Activated T-helper 1 cell treated with anti-CD3 and anti-CD28 coated beads, Interleukin-12 subunit alpha, Interleukin-12 subunit beta, Interleukin-2, Interleukin-4 antibody, amounts not matched to agents 30 ng/mL and 10 ng/mL and 1 ng/mL, durations not matched to agents 14 hours and 24 hours and 36 hours (primary cell): ENCODE measurements at regions of chr6 and their contacts with region 1.

Region 1: DNA sequence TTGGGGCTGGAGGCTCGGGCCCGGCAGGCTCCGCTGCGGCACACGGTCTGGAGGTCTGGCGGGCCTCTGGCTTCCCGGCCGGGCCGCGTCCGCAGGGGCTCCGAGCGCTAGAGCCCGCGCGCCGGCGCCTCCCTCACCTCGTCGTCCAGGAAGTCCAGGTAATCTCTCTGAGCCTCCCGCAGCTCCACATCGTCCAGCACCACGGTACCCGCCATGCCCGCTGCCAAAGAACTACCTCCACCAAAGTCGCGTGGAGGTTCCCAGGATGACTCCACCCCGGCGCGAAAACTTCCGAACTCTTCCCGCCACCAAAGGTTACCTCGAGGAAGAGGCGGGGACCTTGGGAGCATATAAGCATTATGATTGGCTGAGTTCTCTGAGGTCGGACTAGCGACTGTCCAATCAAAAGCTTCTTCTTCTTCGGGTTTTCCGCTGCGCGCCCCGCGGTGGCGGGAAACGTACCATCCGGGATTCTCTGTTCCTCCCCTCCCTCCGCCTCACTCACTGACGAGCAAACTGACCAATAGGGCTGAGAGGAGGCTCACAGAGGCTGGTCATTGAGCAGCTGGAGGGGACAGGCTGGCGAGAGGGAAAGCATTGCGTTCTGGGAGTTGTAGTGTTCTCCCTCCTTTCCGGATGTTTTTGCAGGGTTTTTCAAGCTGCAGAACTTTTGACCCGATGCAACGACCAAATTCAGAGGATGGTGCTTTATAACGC is at the start of gene MCM3:
- DNase-seq: peak; percentile 97
- H3K4me3 Mint-ChIP-seq: no peak within 1 kb of the TSS
- H3K27ac Mint-ChIP-seq: peak within 1 kb of the TSS; percentile 76
- H3K4me1 Mint-ChIP-seq: peaks cover 50% of the 10 kb centered on the region
- H3K27me3 Mint-ChIP-seq: no peaks in the 10 kb centered on the region
- total RNA-seq, gene MCM3: 212 and 214 TPM in 2 replicates

Region 2: GRCh38 chr6:52253494-52253893 is 31.1 kb before region 1 on chr6:
- intact Hi-C with region 1: no loop called
- DNase-seq: peak; percentile 19
- H3K4me3 Mint-ChIP-seq: no peak overlapping the region
- H3K27ac Mint-ChIP-seq: no peak overlapping the region
- H3K4me1 Mint-ChIP-seq: peaks cover 32% of the 10 kb centered on the region
- H3K27me3 Mint-ChIP-seq: peaks cover 54% of the 10 kb centered on the region

Region 3: GRCh38 chr6:52263709-52264540 is 20.7 kb before region 1 on chr6:
- intact Hi-C with region 1: loop called (anchors 1 kb)
- DNase-seq: peak; percentile 63
- H3K4me3 Mint-ChIP-seq: no peak overlapping the region
- H3K27ac Mint-ChIP-seq: peak overlapping the region; percentile 47
- H3K4me1 Mint-ChIP-seq: peaks cover 7% of the 10 kb centered on the region
- H3K27me3 Mint-ChIP-seq: no peaks in the 10 kb centered on the region

Region 4: DNA sequence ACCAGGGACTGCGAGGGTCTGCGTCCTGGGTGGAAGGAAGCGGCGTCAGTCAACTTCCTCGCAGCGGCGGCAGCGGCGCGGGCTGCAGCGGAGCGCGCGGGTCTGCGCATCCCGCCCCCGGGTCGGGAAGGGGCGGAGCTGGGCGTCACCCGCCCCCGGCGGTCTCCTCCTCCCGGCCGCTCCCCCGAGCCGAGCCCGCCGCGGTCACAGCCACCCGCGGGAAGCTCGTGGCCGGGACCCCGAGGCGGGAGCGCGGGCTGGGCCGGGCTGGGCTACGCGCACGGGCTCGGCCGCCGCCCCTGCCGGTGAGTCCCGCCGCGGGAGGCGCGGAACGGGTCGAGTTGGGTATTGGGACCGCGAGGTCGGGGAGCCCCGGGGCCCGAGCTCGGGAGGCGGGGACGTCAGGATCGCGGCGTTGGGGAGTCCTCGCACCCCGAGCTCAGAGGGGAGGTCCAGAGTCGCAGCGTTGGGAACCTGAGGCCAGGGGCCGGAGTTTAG is 77.4 kb after region 1 on chr6 and contains the start of gene PAQR8:
- intact Hi-C with region 1: loop called (anchors 1 kb)
- DNase-seq: peak; percentile 75
- H3K4me3 Mint-ChIP-seq: peak within 1 kb of the TSS; percentile 96
- H3K27ac Mint-ChIP-seq: peak within 1 kb of the TSS; percentile 84
- H3K4me1 Mint-ChIP-seq: peaks cover 33% of the 10 kb centered on the region
- H3K27me3 Mint-ChIP-seq: peaks cover 7% of the 10 kb centered on the region
- total RNA-seq, gene PAQR8: 2.5 and 2.8 TPM in 2 replicates

Region 5: DNA sequence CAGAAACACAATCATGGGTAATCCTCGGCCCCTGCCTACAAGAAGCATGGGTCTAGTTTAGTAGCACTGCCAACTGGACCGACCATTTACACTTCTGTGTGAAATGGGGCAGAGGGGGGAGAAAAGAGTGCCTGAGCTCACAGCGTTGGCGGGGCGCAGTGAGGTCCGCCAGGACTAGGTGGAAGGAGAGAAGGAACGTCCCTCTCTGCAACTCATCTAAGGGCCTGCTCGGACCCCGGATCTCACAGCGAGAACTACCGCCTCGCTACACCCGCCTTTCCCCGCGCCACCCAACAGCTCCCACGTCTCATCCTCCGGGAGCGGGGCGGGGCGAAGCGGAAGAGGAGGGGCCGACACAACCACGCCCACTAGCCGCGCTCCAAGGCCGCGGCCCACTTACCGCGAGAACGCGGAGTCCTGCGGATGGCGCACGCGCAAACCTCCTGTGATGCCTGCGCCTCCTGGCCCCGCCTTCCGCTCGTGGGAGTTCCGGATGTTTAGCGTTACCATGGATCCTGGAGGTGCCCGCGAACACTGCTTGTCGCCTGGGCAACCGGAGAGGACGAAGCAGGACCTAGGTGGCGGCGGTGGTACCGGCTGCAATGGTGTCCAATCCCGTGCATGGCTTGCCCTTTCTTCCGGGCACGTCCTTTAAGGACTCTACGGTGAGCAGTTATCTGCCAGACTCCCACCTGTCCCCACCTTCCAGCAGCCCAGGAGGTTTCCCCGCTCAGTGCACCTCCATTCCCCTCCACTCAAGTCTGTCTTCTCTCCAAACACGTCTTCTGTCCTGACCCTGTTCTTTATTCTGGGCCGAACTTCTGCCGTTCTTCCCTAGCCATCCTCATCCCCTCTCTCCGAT is 135.4 kb after region 1 on chr6 and contains the start of gene EFHC1:
- intact Hi-C with region 1: loop called (anchors 1 kb)
- DNase-seq: peak; percentile 98
- H3K4me3 Mint-ChIP-seq: no peak within 1 kb of the TSS
- H3K27ac Mint-ChIP-seq: no peak within 1 kb of the TSS
- H3K4me1 Mint-ChIP-seq: peaks cover 14% of the 10 kb centered on the region
- H3K27me3 Mint-ChIP-seq: peaks cover 6% of the 10 kb centered on the region
- total RNA-seq, gene EFHC1: 0.70 and 1.3 TPM in 2 replicates

Region 6: GRCh38 chr6:52435345-52435744 is 150.7 kb after region 1 on chr6:
- intact Hi-C with region 1: no loop called
- DNase-seq: no peak
- H3K4me3 Mint-ChIP-seq: no peak overlapping the region
- H3K27ac Mint-ChIP-seq: no peak overlapping the region
- H3K4me1 Mint-ChIP-seq: peaks cover 6% of the 10 kb centered on the region
- H3K27me3 Mint-ChIP-seq: peaks cover 12% of the 10 kb centered on the region

Region 7: GRCh38 chr6:52995913-52996645 is 711.5 kb after region 1 on chr6:
- intact Hi-C with region 1: loop called (anchors 5 kb)
- DNase-seq: no peak
- H3K4me3 Mint-ChIP-seq: peak overlapping the region; percentile 88
- H3K27ac Mint-ChIP-seq: peak overlapping the region; percentile 99
- H3K4me1 Mint-ChIP-seq: peaks cover 47% of the 10 kb centered on the region
- H3K27me3 Mint-ChIP-seq: peaks cover 11% of the 10 kb centered on the region

Region 8: DNA sequence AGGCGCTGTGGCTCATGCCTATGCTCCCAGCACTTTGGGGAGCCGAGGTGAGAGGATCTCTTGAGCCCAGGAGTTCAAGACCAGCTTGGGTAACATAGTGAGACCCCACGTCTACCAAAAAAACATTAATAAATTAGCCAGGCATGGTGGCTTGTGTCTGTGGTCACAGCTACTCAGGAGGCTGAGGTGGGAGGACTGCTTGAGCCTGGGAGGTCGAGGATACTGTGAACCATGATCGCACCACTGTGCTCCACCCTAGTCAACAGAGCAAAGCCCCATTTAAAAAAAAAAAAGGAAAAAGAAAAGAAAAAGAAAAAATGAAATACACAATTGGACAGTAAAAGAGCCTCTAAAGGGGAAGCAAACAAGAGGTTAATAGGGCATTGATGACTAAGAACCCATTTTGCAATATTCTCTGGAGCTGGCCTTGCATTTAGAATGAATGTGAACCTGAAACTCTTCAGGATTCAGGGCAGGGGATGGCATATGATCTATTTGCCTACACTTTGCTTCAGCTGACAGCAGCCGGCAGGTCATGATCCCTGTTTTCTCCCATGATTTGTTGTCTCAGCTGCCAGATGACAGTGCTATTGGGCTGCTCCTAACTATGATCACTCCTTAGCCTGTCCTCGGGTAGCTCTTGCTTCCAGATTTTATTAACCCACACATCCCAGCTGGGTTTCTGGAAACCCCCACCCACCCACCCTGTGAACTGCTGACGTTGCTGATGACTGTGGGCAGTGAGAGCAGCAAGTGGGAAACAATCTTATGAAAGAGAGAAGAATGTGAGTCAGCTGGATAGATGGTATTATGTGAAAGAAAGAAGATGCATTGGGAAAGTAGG is 1147.9 kb after region 1 on chr6:
- intact Hi-C with region 1: no loop called
- DNase-seq: no peak
- H3K4me3 Mint-ChIP-seq: no peak overlapping the region
- H3K27ac Mint-ChIP-seq: no peak overlapping the region
- H3K4me1 Mint-ChIP-seq: peaks cover 28% of the 10 kb centered on the region
- H3K27me3 Mint-ChIP-seq: peaks cover 4% of the 10 kb centered on the region

Region 9: GRCh38 chr6:53794720-53795253 is 1510.2 kb after region 1 on chr6 and contains the start of gene LRRC1:
- intact Hi-C with region 1: loop called (anchors 10 kb)
- DNase-seq: peak; percentile 86
- H3K4me3 Mint-ChIP-seq: peak within 1 kb of the TSS; percentile 96
- H3K27ac Mint-ChIP-seq: peak within 1 kb of the TSS; percentile 78
- H3K4me1 Mint-ChIP-seq: peaks cover 41% of the 10 kb centered on the region
- H3K27me3 Mint-ChIP-seq: peaks cover 53% of the 10 kb centered on the region
- total RNA-seq, gene LRRC1: 1.7 and 1.9 TPM in 2 replicates